GM12878 (cell line): ENCODE measurements at regions of chr20 and their contacts with region 1.

Region 1: DNA sequence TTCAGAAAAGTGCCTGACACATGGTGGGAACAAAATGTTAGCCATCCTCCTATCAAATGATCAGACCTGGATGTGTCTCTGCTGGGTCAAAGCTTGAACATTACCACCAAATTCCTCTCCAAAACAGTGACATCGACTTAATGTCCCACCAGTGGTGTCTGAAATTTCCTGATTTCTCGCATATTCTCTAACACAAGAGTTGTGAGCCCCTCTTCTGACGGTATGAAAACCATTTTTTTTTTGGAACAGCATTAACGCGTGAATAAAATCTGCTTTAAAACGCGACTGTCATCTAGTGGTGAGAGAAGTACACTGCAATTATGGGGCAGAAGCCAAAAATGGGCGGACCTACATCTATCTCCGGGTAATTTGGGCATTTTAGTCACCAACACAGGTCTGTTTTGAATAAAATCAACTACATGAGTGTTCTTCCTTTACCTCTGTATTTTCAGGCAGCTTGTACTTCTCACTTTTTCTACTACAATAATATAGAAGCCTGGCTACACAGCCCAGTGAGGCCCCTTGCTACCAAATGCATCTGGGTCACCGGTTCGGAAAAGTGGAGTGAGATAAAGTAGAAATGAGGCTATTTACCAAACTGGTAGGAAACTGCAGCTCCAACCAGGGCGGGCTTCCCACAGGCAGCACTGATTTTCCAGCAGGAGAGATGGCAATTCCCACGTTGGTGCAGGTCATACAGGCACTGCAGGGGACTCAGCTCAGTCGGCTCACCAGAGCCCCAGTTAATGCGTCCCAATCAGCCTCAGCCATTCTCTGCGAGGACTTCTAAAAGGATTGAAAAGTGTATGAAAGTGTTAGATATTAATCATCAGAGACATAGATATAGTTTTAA is 27.4 kb downstream of the MGME1 start:
- DNase-seq: no peak
- ATAC-seq: peak; percentile 61
- H3K4me3 ChIP-seq: no peak overlapping the region
- H3K27ac ChIP-seq: no peak overlapping the region
- H3K4me1 ChIP-seq: peaks cover 21% of the 10 kb centered on the region
- H3K27me3 ChIP-seq: no peaks in the 10 kb centered on the region
- CTCF ChIP-seq: peak; percentile 97 to 99 (median 98)
- EP300 ChIP-seq: no peak
- POLR2A ChIP-seq: no peak
- RAD21 ChIP-seq: peak; percentile 99

Region 2: GRCh38 chr20:17536944-17537444 is 459.2 kb before region 1 on chr20:
- CTCF ChIA-PET with region 1: interaction called, 8 read pairs
- POLR2A ChIA-PET with region 1: no interaction called
- RAD21 ChIA-PET with region 1: interaction called, 6 read pairs
- SMC1A ChIA-PET with region 1: interaction called, 11 read pairs
- in situ Hi-C with region 1: loop called (anchors 5 kb)
- intact Hi-C with region 1: loop called (anchors 1 kb)
- DNase-seq: no peak
- ATAC-seq: peak; percentile 98
- H3K4me3 ChIP-seq: no peak overlapping the region
- H3K27ac ChIP-seq: no peak overlapping the region
- H3K4me1 ChIP-seq: peaks cover 6% of the 10 kb centered on the region
- H3K27me3 ChIP-seq: no peaks in the 10 kb centered on the region
- CTCF ChIP-seq: peak; percentile 83 to 93 (median 84)
- EP300 ChIP-seq: no peak
- POLR2A ChIP-seq: no peak
- RAD21 ChIP-seq: peak; percentile 95

Region 3: GRCh38 chr20:17863461-17864292 is 132.5 kb before region 1 on chr20:
- CTCF ChIA-PET with region 1: no interaction called
- POLR2A ChIA-PET with region 1: no interaction called
- RAD21 ChIA-PET with region 1: no interaction called
- SMC1A ChIA-PET with region 1: no interaction called
- in situ Hi-C with region 1: no loop called
- intact Hi-C with region 1: no loop called
- DNase-seq: no peak
- ATAC-seq: no peak
- H3K4me3 ChIP-seq: no peak overlapping the region
- H3K27ac ChIP-seq: no peak overlapping the region
- H3K4me1 ChIP-seq: peaks cover 18% of the 10 kb centered on the region
- H3K27me3 ChIP-seq: no peaks in the 10 kb centered on the region
- CTCF ChIP-seq: no peak
- EP300 ChIP-seq: no peak
- POLR2A ChIP-seq: no peak
- RAD21 ChIP-seq: no peak

Region 4: DNA sequence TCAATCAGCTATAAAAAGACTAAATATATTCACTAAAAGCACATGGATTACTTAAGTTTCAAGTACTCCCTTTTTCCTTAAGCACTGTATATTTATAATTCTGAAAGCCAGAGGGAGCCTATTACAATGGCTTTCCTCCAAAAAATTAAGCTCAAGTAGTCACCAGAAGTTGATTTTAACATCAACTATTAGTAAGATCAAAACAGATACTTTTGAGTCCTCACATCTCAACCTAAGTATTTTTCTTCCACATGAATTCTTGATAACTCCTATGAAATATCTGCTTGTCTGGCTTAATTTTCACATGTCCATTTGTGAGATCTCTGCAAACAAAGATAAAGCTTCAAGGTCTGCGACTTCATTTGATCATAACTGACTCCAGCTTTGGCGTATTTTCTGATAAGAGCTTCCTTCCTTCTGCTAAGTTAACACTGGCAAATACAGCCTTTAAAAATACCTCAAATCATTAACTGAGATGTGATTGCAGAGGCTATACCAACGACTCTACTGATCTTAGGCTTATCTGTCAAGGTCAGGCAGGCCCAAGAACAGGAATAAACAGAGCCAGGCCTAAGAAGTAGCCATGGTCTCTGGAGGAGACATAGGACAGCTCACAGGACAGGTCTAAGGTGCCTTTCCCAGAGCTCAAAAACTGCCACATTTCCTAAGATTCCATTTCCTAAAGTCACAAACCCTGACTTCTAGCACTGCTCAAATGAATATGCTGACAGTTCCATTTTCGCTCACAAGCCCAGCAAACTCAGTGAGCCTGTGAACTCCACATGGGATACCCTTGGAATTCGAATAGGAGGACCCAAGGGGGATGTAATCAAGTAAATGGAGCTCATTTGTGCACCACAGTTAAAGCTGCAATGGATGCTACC is 37.6 kb before region 1 on chr20:
- CTCF ChIA-PET with region 1: interaction called, 19 read pairs
- POLR2A ChIA-PET with region 1: no interaction called
- RAD21 ChIA-PET with region 1: interaction called, 12 read pairs
- SMC1A ChIA-PET with region 1: interaction called, 10 read pairs
- in situ Hi-C with region 1: no loop called
- intact Hi-C with region 1: loop called (anchors 5 kb)
- DNase-seq: no peak
- ATAC-seq: peak; percentile 2; the same call in 2 of the 3 replicates
- H3K4me3 ChIP-seq: peak overlapping the region; percentile 86; the same call in 1 of the 2 replicates
- H3K27ac ChIP-seq: peak overlapping the region; percentile 54
- H3K4me1 ChIP-seq: peaks cover 48% of the 10 kb centered on the region
- H3K27me3 ChIP-seq: no peaks in the 10 kb centered on the region
- CTCF ChIP-seq: no peak
- EP300 ChIP-seq: no peak
- POLR2A ChIP-seq: no peak
- RAD21 ChIP-seq: no peak

Region 5: DNA sequence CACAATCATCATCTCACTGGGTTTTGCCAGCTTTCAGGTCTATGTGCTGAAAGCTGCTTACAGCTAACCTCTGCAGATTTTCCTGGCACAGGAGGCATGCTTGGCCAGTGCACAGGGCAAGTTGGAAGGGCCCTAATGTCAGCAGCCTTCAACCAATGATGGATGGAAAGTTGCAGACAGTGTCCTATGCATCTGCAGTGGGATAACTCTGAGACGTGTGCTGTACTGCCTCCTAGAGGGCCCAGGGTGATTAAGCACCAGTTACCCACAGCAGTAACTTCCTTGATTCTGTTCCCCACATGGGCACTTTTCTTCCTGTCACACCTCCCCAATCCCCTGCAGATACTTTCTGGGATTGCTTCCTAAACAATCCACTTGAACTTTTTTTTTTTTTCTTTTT is 22.9 kb after region 1 on chr20:
- CTCF ChIA-PET with region 1: interaction called, 45 read pairs
- POLR2A ChIA-PET with region 1: no interaction called
- RAD21 ChIA-PET with region 1: interaction called, 5 read pairs
- SMC1A ChIA-PET with region 1: interaction called, 22 read pairs
- in situ Hi-C with region 1: no loop called
- intact Hi-C with region 1: no loop called
- DNase-seq: no peak
- ATAC-seq: peak; percentile 95
- H3K4me3 ChIP-seq: no peak overlapping the region
- H3K27ac ChIP-seq: no peak overlapping the region
- H3K4me1 ChIP-seq: no peaks in the 10 kb centered on the region
- H3K27me3 ChIP-seq: no peaks in the 10 kb centered on the region
- CTCF ChIP-seq: peak; percentile 64 to 81 (median 70); a peak in 5 of 6 replicates
- EP300 ChIP-seq: no peak
- POLR2A ChIP-seq: no peak
- RAD21 ChIP-seq: peak; percentile 71